Activated naive CD4-positive, alpha-beta T cell treated with anti-CD3 and anti-CD28 coated beads for 36 hours (primary cell): ENCODE measurements at regions of chr3 and their contacts with region 1.

Region 1: DNA sequence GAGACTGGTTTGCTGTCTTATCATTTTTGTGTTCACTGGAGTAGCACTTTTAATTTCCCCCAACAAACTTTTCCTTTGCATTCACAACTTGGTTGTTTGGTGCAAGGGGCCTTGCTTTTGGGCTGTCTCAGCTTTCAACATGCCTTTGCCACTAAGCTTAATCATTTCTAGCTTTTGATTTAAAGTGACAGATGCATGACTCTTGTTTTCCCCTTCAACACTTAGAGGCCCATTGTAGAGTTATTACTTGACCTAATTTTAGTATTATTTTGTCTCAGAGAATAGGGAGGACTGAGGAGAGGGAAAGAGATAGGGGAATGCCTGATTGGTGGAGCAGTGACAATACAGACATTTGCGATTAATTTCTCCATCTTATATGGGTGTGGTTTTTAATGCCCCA is 340.1 kb upstream of the MANF start:
- DNase-seq: peak; percentile 11
- H3K4me3 Mint-ChIP-seq: no peak overlapping the region
- H3K27ac Mint-ChIP-seq: no peak overlapping the region
- H3K4me1 Mint-ChIP-seq: peaks cover 15% of the 10 kb centered on the region
- H3K27me3 Mint-ChIP-seq: no peaks in the 10 kb centered on the region

Region 2: GRCh38 chr3:50792568-50792967 is 252.4 kb before region 1 on chr3:
- CTCF ChIA-PET with region 1: no interaction called
- intact Hi-C with region 1: no loop called
- DNase-seq: no peak
- H3K4me3 Mint-ChIP-seq: no peak overlapping the region
- H3K27ac Mint-ChIP-seq: no peak overlapping the region
- H3K4me1 Mint-ChIP-seq: no peaks in the 10 kb centered on the region
- H3K27me3 Mint-ChIP-seq: peaks cover 5% of the 10 kb centered on the region

Region 3: DNA sequence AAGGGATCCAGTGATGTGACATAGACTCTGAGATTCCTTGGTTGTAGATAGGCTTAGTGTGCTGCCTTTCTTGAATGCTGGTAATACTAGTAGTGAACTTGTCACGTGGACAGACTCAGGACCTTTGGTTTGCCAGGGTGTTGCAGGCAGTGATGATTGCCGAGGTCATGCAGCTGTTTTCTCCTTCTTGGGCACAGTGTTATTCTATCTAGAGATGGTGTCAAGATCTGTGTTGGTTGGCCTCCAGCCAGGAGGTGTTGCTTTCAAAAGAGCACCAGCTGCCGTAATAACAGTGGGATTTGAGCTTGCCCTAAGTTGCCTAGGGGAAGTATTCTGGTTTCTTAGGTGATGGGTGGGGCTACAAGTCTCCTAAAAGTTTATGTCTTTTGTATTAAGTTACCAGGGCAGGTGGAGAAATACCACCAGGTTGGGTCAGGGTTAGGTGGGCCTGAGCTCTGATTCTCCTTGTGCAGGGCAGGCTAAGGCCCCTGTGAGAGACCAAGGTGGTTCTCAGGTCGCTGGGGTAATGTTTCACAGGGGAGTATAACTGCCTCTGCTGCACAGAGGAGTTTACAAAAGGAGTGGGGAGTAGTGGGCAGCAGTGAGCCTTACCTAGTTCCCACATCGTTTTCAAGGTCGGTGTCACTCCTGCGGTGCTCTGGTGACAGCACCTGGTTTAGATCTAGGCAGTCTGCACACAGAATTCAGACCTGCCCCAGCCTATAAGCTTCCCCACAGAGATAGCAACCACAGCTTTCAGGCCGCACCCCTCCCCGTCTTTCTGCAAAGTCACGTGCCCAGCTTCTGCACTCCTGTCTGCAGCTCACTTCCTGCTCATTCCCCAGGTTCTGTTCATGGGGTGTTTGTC is 20.0 kb before region 1 on chr3:
- CTCF ChIA-PET with region 1: interaction called, 4 read pairs
- intact Hi-C with region 1: loop called (anchors 1 kb)
- DNase-seq: peak; percentile 87
- H3K4me3 Mint-ChIP-seq: peak overlapping the region; percentile 8
- H3K27ac Mint-ChIP-seq: peak overlapping the region; percentile 83
- H3K4me1 Mint-ChIP-seq: peaks cover 39% of the 10 kb centered on the region
- H3K27me3 Mint-ChIP-seq: no peaks in the 10 kb centered on the region